CD4-positive, alpha-beta memory T cell (primary cell): ENCODE measurements at regions of chr4 and their contacts with region 1.

Region 1: GRCh38 chr4:182938205-182938645 is 21.0 kb upstream of the DCTD start:
- DNase-seq: peak; percentile 46 to 53 (median 50)
- H3K4me3 ChIP-seq: no peak overlapping the region
- H3K4me3 Mint-ChIP-seq: peak overlapping the region in 2 of 8 donors; percentile 12 to 42
- H3K27ac ChIP-seq: no peak overlapping the region
- H3K27ac Mint-ChIP-seq: no peak overlapping the region
- H3K4me1 ChIP-seq: no peaks in the 10 kb centered on the region
- H3K4me1 Mint-ChIP-seq: peaks cover 0 to 5% (median 1%) of the 10 kb centered on the region in 4 donors
- H3K27me3 ChIP-seq: no peaks in the 10 kb centered on the region
- H3K27me3 Mint-ChIP-seq: peaks cover 6 to 7% of the 10 kb centered on the region in 2 donors

Region 2: DNA sequence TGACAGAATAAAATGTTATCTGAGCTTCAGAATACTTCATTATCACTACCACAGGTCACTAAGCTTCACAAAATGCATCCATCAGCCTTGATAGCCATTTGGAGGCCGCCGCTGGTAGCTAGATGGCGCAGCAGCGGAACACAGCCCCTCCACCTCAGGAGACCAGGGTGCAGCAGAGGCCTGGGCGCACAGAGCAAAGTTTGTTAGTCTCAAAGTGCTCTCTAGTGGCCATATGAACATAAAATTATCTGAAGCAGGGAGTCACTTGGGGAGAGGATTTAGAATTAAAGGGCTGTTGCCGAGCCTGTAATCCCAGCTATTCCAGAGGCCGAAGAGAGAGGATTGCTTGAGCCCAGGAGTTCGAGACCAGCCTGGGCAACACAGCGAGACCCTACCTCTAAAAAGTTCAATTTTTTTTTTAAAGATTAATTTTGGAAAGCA is 12.9 kb before region 1 on chr4:
- CTCF ChIA-PET with region 1: interaction called, 76 read pairs
- POLR2A ChIA-PET with region 1: no interaction called
- intact Hi-C with region 1: no loop called
- DNase-seq: peak; percentile 43 to 55 (median 47)
- H3K4me3 ChIP-seq: no peak overlapping the region
- H3K4me3 Mint-ChIP-seq: no peak overlapping the region
- H3K27ac ChIP-seq: no peak overlapping the region
- H3K27ac Mint-ChIP-seq: no peak overlapping the region
- H3K4me1 ChIP-seq: no peaks in the 10 kb centered on the region
- H3K4me1 Mint-ChIP-seq: peaks cover 0 to 2% (median 0%) of the 10 kb centered on the region in 4 donors
- H3K27me3 ChIP-seq: no peaks in the 10 kb centered on the region
- H3K27me3 Mint-ChIP-seq: no peaks in the 10 kb centered on the region

Region 3: DNA sequence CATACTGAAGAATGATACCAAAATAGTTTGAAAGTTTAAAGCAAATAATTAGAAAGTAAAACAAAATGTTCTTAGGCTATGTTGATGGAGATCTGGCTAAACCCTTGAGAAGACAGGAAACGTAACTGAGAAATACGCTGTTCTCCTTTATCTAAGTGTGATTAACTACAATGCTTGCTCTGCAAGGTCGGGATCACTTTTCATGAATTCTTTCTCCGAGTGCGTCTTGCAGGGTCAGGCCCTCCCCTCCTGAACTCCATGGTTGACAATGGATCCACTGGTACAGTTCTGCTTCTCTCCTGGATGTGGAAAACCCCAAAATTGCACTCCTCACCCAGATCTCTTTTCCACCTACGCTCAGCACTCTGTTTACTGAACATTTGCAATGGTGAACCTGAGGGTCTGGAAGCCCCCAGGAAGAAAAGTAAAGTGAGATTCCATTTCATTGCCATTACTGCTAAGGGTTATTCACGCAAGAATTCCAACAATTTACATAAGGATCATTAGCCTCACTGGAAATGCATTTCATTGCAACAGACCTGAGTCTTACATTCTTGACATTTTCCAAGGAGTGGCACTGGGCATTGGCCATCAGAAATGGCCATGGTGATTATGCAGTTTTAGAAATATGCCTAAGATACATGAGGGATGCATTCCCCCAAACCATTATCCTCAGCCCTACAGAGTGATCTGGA is 136.2 kb after region 1 on chr4:
- CTCF ChIA-PET with region 1: interaction called, 7 read pairs
- POLR2A ChIA-PET with region 1: no interaction called
- intact Hi-C with region 1: loop called (anchors 1 kb)
- DNase-seq: no peak
- H3K4me3 ChIP-seq: no peak overlapping the region
- H3K4me3 Mint-ChIP-seq: no peak overlapping the region
- H3K27ac ChIP-seq: no peak overlapping the region
- H3K27ac Mint-ChIP-seq: no peak overlapping the region
- H3K4me1 ChIP-seq: no peaks in the 10 kb centered on the region
- H3K4me1 Mint-ChIP-seq: peaks cover 0 to 2% (median under 1%) of the 10 kb centered on the region in 4 donors
- H3K27me3 ChIP-seq: no peaks in the 10 kb centered on the region
- H3K27me3 Mint-ChIP-seq: peaks cover 2 to 5% of the 10 kb centered on the region in 2 donors

Region 4: DNA sequence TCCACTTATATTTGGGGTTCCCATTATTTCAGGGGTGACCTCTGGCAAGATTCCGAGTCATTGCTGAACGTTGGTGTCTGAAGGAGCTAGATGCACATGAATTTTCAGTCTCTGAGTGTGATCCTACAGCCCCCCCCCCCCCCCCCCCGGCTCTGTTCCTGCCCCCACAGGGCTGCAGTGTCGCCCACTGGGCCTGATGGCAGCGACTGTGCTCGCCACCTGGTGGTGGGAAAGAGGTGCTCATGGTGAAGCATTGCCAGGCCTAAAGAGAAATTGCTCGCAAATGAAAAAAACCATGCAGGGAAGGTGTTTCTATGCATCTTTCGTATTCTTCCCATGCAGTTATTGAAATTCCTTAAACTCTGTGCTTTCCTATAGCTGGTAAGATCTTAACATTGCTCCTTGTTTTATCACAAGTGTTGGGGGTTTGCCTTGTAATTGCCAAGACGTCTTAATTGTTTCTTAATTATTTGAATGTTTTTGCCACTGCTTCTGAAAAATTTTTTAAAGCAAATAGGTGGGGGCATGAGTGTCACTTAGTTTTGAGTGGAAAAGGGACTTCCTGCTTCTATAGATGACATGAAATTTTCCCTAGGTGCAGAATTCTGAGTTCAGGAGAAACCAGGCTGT is 318.6 kb after region 1 on chr4:
- CTCF ChIA-PET with region 1: interaction called, 71 read pairs
- POLR2A ChIA-PET with region 1: interaction called, 5 read pairs
- intact Hi-C with region 1: loop called (anchors 1 kb)
- DNase-seq: peak; percentile 15 to 44 (median 20)
- H3K4me3 ChIP-seq: no peak overlapping the region
- H3K4me3 Mint-ChIP-seq: no peak overlapping the region
- H3K27ac ChIP-seq: no peak overlapping the region
- H3K27ac Mint-ChIP-seq: peak overlapping the region in 1 of 7 donors; percentile 22
- H3K4me1 ChIP-seq: peaks cover under 1% of the 10 kb centered on the region
- H3K4me1 Mint-ChIP-seq: peaks cover 0 to under 1% (median under 1%) of the 10 kb centered on the region in 4 donors
- H3K27me3 ChIP-seq: no peaks in the 10 kb centered on the region
- H3K27me3 Mint-ChIP-seq: no peaks in the 10 kb centered on the region

Region 5: GRCh38 chr4:183407128-183407585 is 468.9 kb after region 1 on chr4:
- CTCF ChIA-PET with region 1: interaction called, 4 read pairs
- POLR2A ChIA-PET with region 1: no interaction called
- intact Hi-C with region 1: loop called (anchors 1 kb)
- DNase-seq: peak; percentile 86 to 92 (median 87)
- H3K4me3 ChIP-seq: peak overlapping the region; percentile 62 to 73
- H3K4me3 Mint-ChIP-seq: peak overlapping the region; percentile 77 to 93 (median 84)
- H3K27ac ChIP-seq: peak overlapping the region; percentile 49
- H3K27ac Mint-ChIP-seq: peak overlapping the region; percentile 75 to 95 (median 88)
- H3K4me1 ChIP-seq: no peaks in the 10 kb centered on the region
- H3K4me1 Mint-ChIP-seq: peaks cover 5 to 19% (median 11%) of the 10 kb centered on the region in 4 donors
- H3K27me3 ChIP-seq: no peaks in the 10 kb centered on the region
- H3K27me3 Mint-ChIP-seq: no peaks in the 10 kb centered on the region